Naive thymus-derived CD4-positive, alpha-beta T cell (primary cell): ENCODE measurements at regions of chr3 and their contacts with region 1.

Region 1: DNA sequence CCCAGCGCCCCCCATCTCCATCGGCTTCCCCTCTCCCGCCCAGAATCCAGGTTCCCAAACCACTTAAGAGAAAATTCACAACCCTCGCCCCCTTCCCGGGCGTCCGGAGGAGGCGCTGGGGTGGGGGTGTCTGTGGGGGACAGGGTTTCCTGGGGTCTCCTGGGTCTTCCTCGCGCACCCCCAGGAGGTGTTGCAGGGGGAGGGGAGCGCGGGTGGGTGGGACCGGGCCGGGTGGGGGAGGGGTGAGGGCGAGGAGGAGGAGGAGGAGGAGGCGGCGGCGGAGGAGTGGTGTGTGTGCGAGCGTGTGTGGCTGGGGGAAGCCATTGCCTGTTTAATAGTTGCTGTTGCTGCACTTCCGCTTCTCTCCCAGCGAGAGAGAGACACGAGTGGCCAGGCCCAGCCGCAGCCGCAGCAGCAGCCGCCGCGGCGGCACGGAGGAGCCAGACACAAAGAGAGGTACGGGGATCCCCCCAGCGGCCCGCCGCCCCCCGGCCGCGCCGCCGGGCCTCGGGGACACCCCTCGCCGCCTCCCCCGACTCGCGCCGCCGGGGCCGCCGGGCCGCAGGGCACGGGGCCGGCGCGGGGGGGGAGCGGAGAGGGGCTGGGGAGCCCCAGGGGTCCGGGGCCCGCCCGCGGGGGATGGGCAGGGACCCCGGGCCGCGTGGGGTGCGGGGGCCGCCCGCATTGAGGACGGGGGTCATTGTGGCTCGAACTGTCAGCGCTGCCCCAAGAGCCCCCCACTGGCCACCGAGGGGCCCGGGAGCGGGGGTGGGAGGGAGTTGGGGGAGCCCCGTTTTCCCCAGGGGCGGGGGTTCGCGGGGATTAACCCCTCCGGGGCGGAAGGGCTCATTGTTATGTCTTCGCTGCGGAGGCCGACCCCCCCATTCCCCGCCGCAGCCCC is at the start of gene UBE2E1:
- DNase-seq: peak; percentile 56 to 82 (median 73)
- ATAC-seq: peak; percentile 91
- H3K4me3 ChIP-seq: peak within 1 kb of the TSS; percentile 57
- H3K4me3 Mint-ChIP-seq: peak within 1 kb of the TSS; percentile 89 to 100 (median 94)
- H3K27ac ChIP-seq: peak within 1 kb of the TSS; percentile 77
- H3K27ac Mint-ChIP-seq: peak within 1 kb of the TSS; percentile 91 to 98 (median 95)
- H3K4me1 ChIP-seq: peaks cover 20 to 21% of the 10 kb centered on the region in 2 donors
- H3K4me1 Mint-ChIP-seq: peaks cover 28 to 48% (median 44%) of the 10 kb centered on the region in 7 donors
- H3K27me3 ChIP-seq: no peaks in the 10 kb centered on the region
- H3K27me3 Mint-ChIP-seq: peaks cover 0 to 31% (median 0%) of the 10 kb centered on the region in 5 donors
- total RNA-seq, gene UBE2E1: 59.0 to 80.0 (median 69.2) TPM

Region 2: GRCh38 chr3:22922317-22922716 is 883.6 kb before region 1 on chr3:
- CTCF ChIA-PET with region 1: no interaction called
- POLR2A ChIA-PET with region 1: no interaction called
- intact Hi-C with region 1: loop called in 1 of 2 experiments (anchors 2 kb)
- DNase-seq: peak in 1 of 9 donors; percentile 1
- ATAC-seq: no peak
- H3K4me3 ChIP-seq: no peak overlapping the region
- H3K4me3 Mint-ChIP-seq: no peak overlapping the region
- H3K27ac ChIP-seq: no peak overlapping the region
- H3K27ac Mint-ChIP-seq: no peak overlapping the region
- H3K4me1 ChIP-seq: no peaks in the 10 kb centered on the region
- H3K4me1 Mint-ChIP-seq: no peaks in the 10 kb centered on the region
- H3K27me3 ChIP-seq: no peaks in the 10 kb centered on the region
- H3K27me3 Mint-ChIP-seq: no peaks in the 10 kb centered on the region

Region 3: DNA sequence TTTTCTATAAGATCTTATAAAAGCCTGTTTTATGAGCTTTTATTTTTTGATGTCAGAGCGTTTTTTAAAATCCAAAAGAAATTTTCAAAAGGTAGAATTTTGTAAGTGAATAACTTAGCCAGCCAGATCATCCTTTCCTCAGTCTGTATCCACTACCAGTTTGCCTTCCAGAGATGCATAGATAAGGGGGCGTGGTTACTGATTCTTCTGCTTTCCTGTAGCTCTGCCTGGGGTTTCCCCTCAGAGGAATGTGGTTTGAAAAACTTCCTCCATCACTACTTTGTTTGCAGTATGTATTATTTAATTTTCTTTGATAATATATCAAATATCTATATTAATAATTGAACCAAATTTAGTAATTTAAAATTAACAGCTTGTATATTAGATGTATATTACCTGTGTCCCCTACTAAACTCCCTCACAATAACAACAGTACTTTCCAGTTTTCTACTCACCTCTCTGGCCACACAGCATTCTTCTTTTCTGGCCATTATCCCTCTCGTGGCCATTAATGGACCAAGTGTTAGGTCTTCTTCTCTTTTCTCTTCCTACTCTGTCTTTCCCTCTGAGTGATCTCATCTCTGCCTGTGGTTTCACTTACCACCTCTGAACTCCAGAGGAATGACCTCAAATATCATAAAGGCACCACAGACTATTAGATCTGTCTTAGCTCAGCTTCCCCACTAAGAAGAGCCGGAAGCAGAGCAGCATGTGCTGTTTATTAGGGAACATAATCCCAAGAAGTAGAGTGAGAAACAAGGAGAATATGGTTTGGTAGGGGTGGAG is 363.1 kb before region 1 on chr3:
- CTCF ChIA-PET with region 1: no interaction called
- POLR2A ChIA-PET with region 1: no interaction called
- intact Hi-C with region 1: loop called in 1 of 2 experiments (anchors 1 kb)
- DNase-seq: peak in 7 of 9 donors; percentile 11 to 48 (median 40)
- ATAC-seq: peak; percentile 90
- H3K4me3 ChIP-seq: no peak overlapping the region
- H3K4me3 Mint-ChIP-seq: peak overlapping the region in 9 of 10 donors; percentile 5 to 65 (median 32)
- H3K27ac ChIP-seq: no peak overlapping the region
- H3K27ac Mint-ChIP-seq: peak overlapping the region in 2 of 9 donors; percentile 5 to 78
- H3K4me1 ChIP-seq: peaks cover 0 to 26% of the 10 kb centered on the region in 2 donors
- H3K4me1 Mint-ChIP-seq: peaks cover 20 to 60% (median 49%) of the 10 kb centered on the region in 7 donors
- H3K27me3 ChIP-seq: no peaks in the 10 kb centered on the region
- H3K27me3 Mint-ChIP-seq: peaks cover 0 to 9% (median 0%) of the 10 kb centered on the region in 5 donors

Region 4: DNA sequence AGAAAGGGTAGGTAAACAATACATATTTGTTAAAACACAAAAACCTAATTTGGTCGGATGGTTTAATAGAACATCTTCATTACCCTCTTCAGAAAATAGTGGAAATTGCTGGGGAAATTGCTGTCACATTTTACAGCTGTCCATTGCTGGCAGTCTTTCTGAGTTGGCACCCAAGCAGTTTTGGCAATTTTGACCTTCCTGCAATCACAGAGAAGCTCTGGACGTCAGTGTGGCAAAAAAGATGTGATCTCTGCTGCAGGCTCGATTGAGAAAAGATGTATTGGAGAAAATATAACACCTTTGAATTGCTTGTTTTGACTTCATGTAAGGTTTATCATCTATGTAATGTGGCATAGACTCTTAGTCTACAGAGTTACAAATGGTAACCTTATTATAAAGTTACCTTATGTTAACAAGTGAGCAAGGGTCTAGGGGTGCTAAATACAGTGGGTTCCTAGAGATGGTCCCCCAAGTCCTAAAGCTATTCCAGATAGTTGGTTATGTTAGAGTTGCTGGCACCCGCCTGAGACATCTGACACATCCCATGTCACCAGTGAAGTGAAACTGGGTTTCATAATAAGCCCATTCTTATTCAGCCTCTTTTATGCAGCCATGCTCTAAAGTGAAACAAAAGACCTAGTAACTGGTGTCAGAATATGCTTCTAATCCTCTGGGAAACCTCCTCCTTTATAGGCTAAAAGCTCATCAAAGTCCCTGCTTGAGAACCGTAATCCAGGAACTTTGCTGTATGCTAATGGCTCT is 13.9 kb after region 1 on chr3:
- CTCF ChIA-PET with region 1: no interaction called
- POLR2A ChIA-PET with region 1: no interaction called
- intact Hi-C with region 1: no loop called
- DNase-seq: no peak
- ATAC-seq: peak; percentile 38
- H3K4me3 ChIP-seq: no peak overlapping the region
- H3K4me3 Mint-ChIP-seq: no peak overlapping the region
- H3K27ac ChIP-seq: no peak overlapping the region
- H3K27ac Mint-ChIP-seq: no peak overlapping the region
- H3K4me1 ChIP-seq: no peaks in the 10 kb centered on the region
- H3K4me1 Mint-ChIP-seq: peaks cover 29 to 90% (median 59%) of the 10 kb centered on the region in 7 donors
- H3K27me3 ChIP-seq: no peaks in the 10 kb centered on the region
- H3K27me3 Mint-ChIP-seq: no peaks in the 10 kb centered on the region

Region 5: DNA sequence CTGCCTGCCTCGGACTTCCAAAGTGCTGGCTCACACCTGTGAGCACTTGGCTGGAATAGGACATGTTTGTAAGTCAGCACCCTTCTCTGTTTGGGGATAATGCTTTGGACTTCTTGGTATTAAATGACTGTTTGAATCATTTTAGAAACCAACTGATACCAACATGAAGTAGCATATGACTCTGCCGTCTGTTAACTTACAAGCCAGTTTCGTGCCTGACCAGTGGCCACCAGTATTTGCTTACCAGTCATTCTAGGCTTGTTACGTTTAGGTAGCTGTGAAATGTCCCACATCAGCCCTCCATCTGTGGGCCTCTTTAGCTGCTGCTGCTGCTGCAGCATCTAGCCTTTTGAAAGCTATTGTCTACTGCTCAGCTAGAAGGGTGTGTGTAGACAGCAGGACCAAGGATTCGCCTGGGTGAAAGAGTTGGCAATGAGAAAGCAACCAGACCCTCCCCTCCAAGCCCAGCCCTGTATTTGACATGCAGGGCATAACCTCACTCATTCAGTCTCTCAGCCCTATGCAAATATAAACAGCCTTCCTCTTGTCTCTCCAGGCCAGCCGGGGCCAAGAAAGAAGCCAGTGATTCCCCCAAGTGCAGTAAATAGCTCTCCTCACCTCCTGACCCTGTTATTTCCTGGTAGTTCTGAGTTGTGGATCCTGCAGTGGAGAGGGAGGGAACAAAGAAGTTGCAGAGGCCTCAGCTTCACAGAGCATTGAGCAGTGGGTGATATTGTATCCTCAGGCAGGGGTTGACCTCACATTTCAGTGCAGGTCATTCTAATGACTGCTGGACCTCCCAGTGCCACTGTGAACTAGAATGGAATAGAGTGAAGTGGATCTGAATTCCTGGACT is 59.9 kb after region 1 on chr3:
- CTCF ChIA-PET with region 1: no interaction called
- POLR2A ChIA-PET with region 1: no interaction called
- intact Hi-C with region 1: loop called in 1 of 2 experiments (anchors 5 kb)
- DNase-seq: no peak
- ATAC-seq: peak; percentile 6
- H3K4me3 ChIP-seq: no peak overlapping the region
- H3K4me3 Mint-ChIP-seq: no peak overlapping the region
- H3K27ac ChIP-seq: no peak overlapping the region
- H3K27ac Mint-ChIP-seq: peak overlapping the region in 6 of 9 donors; percentile 6 to 74 (median 29)
- H3K4me1 ChIP-seq: no peaks in the 10 kb centered on the region
- H3K4me1 Mint-ChIP-seq: peaks cover 10 to 77% (median 50%) of the 10 kb centered on the region in 7 donors
- H3K27me3 ChIP-seq: no peaks in the 10 kb centered on the region
- H3K27me3 Mint-ChIP-seq: no peaks in the 10 kb centered on the region

Region 6: GRCh38 chr3:23916886-23917678 is 111.2 kb after region 1 on chr3 and contains the starts of genes NKIRAS1 and RPL15:
- CTCF ChIA-PET with region 1: no interaction called
- POLR2A ChIA-PET with region 1: interaction called, 13 read pairs
- intact Hi-C with region 1: loop called (anchors 1 kb)
- DNase-seq: peak; percentile 90 to 98 (median 97)
- ATAC-seq: peak; percentile 97
- H3K4me3 ChIP-seq: peak within 1 kb of the TSS; percentile 88
- H3K4me3 Mint-ChIP-seq: peak within 1 kb of the TSS; percentile 92 to 100 (median 98)
- H3K27ac ChIP-seq: peak within 1 kb of the TSS; percentile 83
- H3K27ac Mint-ChIP-seq: peak within 1 kb of the TSS; percentile 97 to 99 (median 98)
- H3K4me1 ChIP-seq: peaks cover 14 to 18% of the 10 kb centered on the region in 2 donors
- H3K4me1 Mint-ChIP-seq: peaks cover 33 to 52% (median 49%) of the 10 kb centered on the region in 7 donors
- H3K27me3 ChIP-seq: no peaks in the 10 kb centered on the region
- H3K27me3 Mint-ChIP-seq: peaks cover 0 to 4% (median 0%) of the 10 kb centered on the region in 5 donors
- total RNA-seq, gene NKIRAS1: 2.2 to 6.4 (median 3.2) TPM
- total RNA-seq, gene RPL15: 1,489 to 2,250 (median 2,129) TPM

Region 7: GRCh38 chr3:25664810-25665314 is 1859.0 kb after region 1 on chr3 and contains the start of gene TOP2B:
- CTCF ChIA-PET with region 1: no interaction called
- POLR2A ChIA-PET with region 1: no interaction called
- intact Hi-C with region 1: loop called in 1 of 2 experiments (anchors 5 kb)
- DNase-seq: peak; percentile 87 to 96 (median 95)
- ATAC-seq: peak; percentile 96
- H3K4me3 ChIP-seq: peak within 1 kb of the TSS; percentile 63
- H3K4me3 Mint-ChIP-seq: peak within 1 kb of the TSS; percentile 89 to 100 (median 99)
- H3K27ac ChIP-seq: peak within 1 kb of the TSS; percentile 95
- H3K27ac Mint-ChIP-seq: peak within 1 kb of the TSS; percentile 97 to 100 (median 99)
- H3K4me1 ChIP-seq: peaks cover 11 to 34% of the 10 kb centered on the region in 2 donors
- H3K4me1 Mint-ChIP-seq: peaks cover 20 to 57% (median 50%) of the 10 kb centered on the region in 7 donors
- H3K27me3 ChIP-seq: no peaks in the 10 kb centered on the region
- H3K27me3 Mint-ChIP-seq: peaks cover 0 to 4% (median 0%) of the 10 kb centered on the region in 5 donors
- total RNA-seq, gene TOP2B: 109 to 190 (median 127) TPM